Prostate gland (tissue), 2 donors: ENCODE measurements at regions of chr10 and their contacts with region 1.

Region 1: GRCh38 chr10:15262036-15262713 is 93.7 kb upstream of the NMT2 start:
- DNase-seq: peak; percentile 42
- H3K4me3 ChIP-seq: no peak overlapping the region
- H3K27ac ChIP-seq: no peak overlapping the region
- H3K4me1 ChIP-seq: no peaks in the 10 kb centered on the region
- H3K27me3 ChIP-seq: no peaks in the 10 kb centered on the region
- CTCF ChIP-seq: peak in 3 of 4 experiments; percentile 35 to 61 (median 36)
- POLR2A ChIP-seq: no peak

Region 2: DNA sequence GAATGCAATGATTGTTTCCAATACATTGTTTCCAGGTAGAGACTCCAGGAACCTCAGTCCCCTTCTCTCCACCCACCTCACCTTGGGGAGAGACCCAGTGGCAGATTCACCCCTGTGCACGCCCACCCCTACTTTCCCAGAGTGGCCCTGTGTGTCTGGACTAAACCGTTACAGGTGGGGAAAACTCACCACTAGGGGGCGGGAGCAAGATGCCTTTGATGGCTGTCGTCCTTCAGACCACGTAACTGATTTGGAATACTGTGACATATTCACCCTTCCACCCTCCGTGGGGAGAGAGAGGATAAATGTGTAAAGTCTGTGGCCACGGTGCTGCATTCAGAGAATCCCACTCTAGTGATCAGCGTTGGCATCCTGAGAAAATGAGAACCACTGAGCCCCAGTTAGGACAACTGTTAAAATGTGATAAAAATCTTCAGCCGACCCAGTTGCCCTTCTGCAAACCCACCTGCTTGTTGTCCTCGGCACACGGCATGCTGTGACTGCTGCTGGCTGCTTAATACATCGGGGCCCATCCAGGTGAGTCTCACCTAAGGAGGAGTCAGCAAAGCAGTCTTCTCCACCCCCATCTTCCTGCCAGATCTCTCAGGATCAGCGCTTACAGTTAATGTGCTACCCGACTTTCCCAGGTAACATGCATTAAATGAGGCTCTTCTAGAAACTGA is 52.2 kb before region 1 on chr10:
- intact Hi-C with region 1: loop called (anchors 5 kb)
- DNase-seq: peak; percentile 85
- H3K4me3 ChIP-seq: no peak overlapping the region
- H3K27ac ChIP-seq: no peak overlapping the region
- H3K4me1 ChIP-seq: no peaks in the 10 kb centered on the region
- H3K27me3 ChIP-seq: no peaks in the 10 kb centered on the region
- CTCF ChIP-seq: peak; percentile 60 to 88 (median 78)
- POLR2A ChIP-seq: no peak

Region 3: GRCh38 chr10:15370856-15371701 is 108.9 kb after region 1 on chr10 and contains the start of gene FAM171A1:
- intact Hi-C with region 1: loop called (anchors 1 kb)
- DNase-seq: peak; percentile 59
- H3K4me3 ChIP-seq: peak within 1 kb of the TSS; percentile 58 to 67
- H3K27ac ChIP-seq: peak within 1 kb of the TSS; percentile 61 to 62
- H3K4me1 ChIP-seq: no peaks in the 10 kb centered on the region
- H3K27me3 ChIP-seq: no peaks in the 10 kb centered on the region
- CTCF ChIP-seq: peak in 1 of 4 experiments; percentile 25
- POLR2A ChIP-seq: no peak
- total RNA-seq, gene FAM171A1: 16.3 to 24.2 TPM

Region 4: GRCh38 chr10:15726042-15726441 is 463.9 kb after region 1 on chr10:
- intact Hi-C with region 1: no loop called
- DNase-seq: no peak
- H3K4me3 ChIP-seq: no peak overlapping the region
- H3K27ac ChIP-seq: no peak overlapping the region
- H3K4me1 ChIP-seq: no peaks in the 10 kb centered on the region
- H3K27me3 ChIP-seq: no peaks in the 10 kb centered on the region
- CTCF ChIP-seq: peak in 1 of 4 experiments; percentile 4
- POLR2A ChIP-seq: no peak